ENCODE measurements at regions of chr18 and their contacts with region 1.

Region 1: DNA sequence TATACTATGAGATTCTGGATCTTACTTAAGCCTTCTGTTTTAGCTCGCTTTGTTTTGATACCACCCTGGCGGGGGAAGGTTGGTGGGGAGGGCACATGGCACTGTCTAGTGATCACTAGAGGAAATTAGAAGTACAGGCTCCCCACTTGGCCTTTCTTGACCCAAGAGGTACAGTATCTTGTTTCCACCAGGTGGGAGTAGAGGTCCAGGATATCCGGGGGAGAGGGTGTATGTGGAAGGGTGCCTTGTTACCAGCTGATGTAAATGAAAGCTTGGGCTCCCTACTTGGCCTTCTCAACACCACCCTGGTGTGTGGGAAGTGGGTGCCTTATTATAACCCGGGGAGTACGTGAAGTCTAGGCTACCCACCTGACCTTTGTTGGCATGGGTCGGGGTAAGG is 7.5 kb downstream of the GALNT1 start:
- DNase-seq: peak in 26 of 35 experiments; percentile 2 to 56 (median 17)
- ATAC-seq: peak; percentile 45 to 85 (median 78)
- H3K4me3 ChIP-seq: no peak overlapping the region
- H3K4me3 Mint-ChIP-seq: no peak overlapping the region
- H3K27ac ChIP-seq: no peak overlapping the region
- H3K27ac Mint-ChIP-seq: no peak overlapping the region
- H3K4me1 ChIP-seq: no peaks in the 10 kb centered on the region
- H3K4me1 Mint-ChIP-seq: peaks cover 39 to 45% (median 43%) of the 10 kb centered on the region in 3 donors
- H3K27me3 ChIP-seq: no peaks in the 10 kb centered on the region
- H3K27me3 Mint-ChIP-seq: no peaks in the 10 kb centered on the region

Region 2: GRCh38 chr18:35083174-35083712 is 505.8 kb before region 1 on chr18:
- CTCF ChIA-PET with region 1: interaction called in 1 of 2 experiments, 11 read pairs
- POLR2A ChIA-PET with region 1: no interaction called
- DNase-seq: no peak
- ATAC-seq: no peak
- H3K4me3 ChIP-seq: no peak overlapping the region
- H3K4me3 Mint-ChIP-seq: no peak overlapping the region
- H3K27ac ChIP-seq: no peak overlapping the region
- H3K27ac Mint-ChIP-seq: no peak overlapping the region
- H3K4me1 ChIP-seq: no peaks in the 10 kb centered on the region
- H3K4me1 Mint-ChIP-seq: peaks cover 52 to 65% (median 52%) of the 10 kb centered on the region in 3 donors
- H3K27me3 ChIP-seq: no peaks in the 10 kb centered on the region
- H3K27me3 Mint-ChIP-seq: no peaks in the 10 kb centered on the region

Region 3: DNA sequence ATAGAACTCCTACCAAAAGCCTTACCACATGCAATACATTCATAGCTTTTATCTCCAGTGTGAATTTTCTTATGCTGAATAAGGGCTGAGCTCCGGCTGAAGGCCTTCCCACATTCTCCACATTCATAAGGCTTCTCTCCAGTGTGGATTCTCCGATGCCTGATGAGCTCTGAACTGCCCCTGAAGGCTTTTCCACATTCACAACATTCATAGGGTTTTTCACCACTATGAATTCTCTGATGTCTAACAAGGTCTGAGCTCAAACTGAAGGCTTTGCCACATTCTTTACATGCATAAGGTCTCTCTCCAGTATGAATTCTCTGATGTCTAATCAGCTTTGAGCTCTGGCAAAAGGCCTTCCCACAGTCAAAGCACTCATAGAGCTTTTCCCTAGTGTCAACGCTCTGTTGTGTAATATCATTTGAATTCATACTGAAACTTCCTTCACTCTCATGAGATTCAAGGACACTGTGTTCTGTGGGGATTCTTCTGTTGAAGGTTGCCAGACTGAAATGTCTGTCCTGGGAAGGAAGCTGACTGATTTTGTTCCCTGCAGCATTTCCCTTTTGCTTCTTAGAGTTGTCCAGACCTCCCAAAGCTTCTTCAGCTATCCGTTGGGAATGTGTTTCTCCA is 335.2 kb before region 1 on chr18:
- CTCF ChIA-PET with region 1: no interaction called
- POLR2A ChIA-PET with region 1: no interaction called
- DNase-seq: no peak
- ATAC-seq: no peak
- H3K4me3 ChIP-seq: no peak overlapping the region
- H3K4me3 Mint-ChIP-seq: no peak overlapping the region
- H3K27ac ChIP-seq: no peak overlapping the region
- H3K27ac Mint-ChIP-seq: no peak overlapping the region
- H3K4me1 ChIP-seq: no peaks in the 10 kb centered on the region
- H3K4me1 Mint-ChIP-seq: no peaks in the 10 kb centered on the region
- H3K27me3 ChIP-seq: no peaks in the 10 kb centered on the region
- H3K27me3 Mint-ChIP-seq: no peaks in the 10 kb centered on the region

Region 4: GRCh38 chr18:36075903-36076579 is 487.0 kb after region 1 on chr18:
- CTCF ChIA-PET with region 1: no interaction called
- POLR2A ChIA-PET with region 1: interaction called in 1 of 2 experiments, 11 read pairs
- DNase-seq: no peak
- ATAC-seq: no peak
- H3K4me3 ChIP-seq: no peak overlapping the region
- H3K4me3 Mint-ChIP-seq: no peak overlapping the region
- H3K27ac ChIP-seq: no peak overlapping the region
- H3K27ac Mint-ChIP-seq: no peak overlapping the region
- H3K4me1 ChIP-seq: no peaks in the 10 kb centered on the region
- H3K4me1 Mint-ChIP-seq: no peaks in the 10 kb centered on the region
- H3K27me3 ChIP-seq: peaks cover 2 to 25% of the 10 kb centered on the region in 2 experiments
- H3K27me3 Mint-ChIP-seq: peaks cover 3 to 24% of the 10 kb centered on the region in 2 donors

Measured in T-cell (primary cell).